ENCODE measurements at regions of chr7 and their contacts with region 1.

Region 1: GRCh38 chr7:8190119-8190895 is 71.7 kb downstream of the ICA1 start:
- DNase-seq: peak; percentile 67 to 77 (median 68)
- H3K4me3 ChIP-seq: no peak overlapping the region
- H3K4me3 Mint-ChIP-seq: no peak overlapping the region
- H3K27ac ChIP-seq: no peak overlapping the region
- H3K27ac Mint-ChIP-seq: peak overlapping the region in 2 of 7 donors; percentile 8 to 48
- H3K4me1 ChIP-seq: peaks cover 7% of the 10 kb centered on the region
- H3K4me1 Mint-ChIP-seq: peaks cover 13 to 22% (median 18%) of the 10 kb centered on the region in 4 donors
- H3K27me3 ChIP-seq: no peaks in the 10 kb centered on the region
- H3K27me3 Mint-ChIP-seq: no peaks in the 10 kb centered on the region

Region 2: DNA sequence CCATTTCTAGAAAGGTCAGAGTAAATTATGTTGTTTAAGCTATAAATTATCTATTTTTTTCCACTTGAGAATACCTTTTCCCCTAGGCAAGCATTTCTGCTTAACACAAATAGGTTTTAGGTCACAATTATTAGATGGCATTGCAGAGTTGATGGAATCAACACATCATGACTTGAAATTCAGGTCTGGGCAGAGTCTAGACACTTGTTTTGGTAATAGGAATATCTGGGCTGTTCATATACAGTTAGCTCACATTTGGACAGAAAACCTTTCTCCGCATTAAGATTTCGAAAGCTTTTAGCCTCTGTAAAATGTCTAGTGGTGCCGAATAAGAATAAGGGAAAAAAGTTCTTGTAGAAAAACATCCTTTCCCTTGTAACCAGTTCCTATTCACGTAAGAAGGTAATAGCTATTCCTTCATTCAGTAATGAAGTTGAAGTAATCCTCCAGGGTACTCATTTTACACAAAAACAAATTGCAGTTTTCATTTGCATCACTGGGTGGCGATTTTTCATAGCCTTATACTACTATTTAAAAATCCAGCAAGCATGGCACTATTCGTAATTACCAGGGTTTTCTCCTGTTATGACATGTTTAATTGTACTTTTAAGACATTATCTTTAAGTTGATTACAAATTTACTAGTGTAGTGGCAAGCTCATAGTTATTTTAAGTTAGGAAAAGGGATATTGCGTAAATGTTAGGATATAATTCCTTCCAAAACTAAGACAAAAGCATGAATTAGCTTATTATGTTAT is 508.9 kb before region 1 on chr7:
- CTCF ChIA-PET with region 1: interaction called, 44 read pairs
- POLR2A ChIA-PET with region 1: interaction called, 4 read pairs
- intact Hi-C with region 1: loop called (anchors 1 kb)
- DNase-seq: peak; percentile 47 to 62 (median 54)
- H3K4me3 ChIP-seq: no peak overlapping the region
- H3K4me3 Mint-ChIP-seq: peak overlapping the region in 3 of 8 donors; percentile 21 to 51 (median 35)
- H3K27ac ChIP-seq: no peak overlapping the region
- H3K27ac Mint-ChIP-seq: peak overlapping the region in 5 of 7 donors; percentile 41 to 59 (median 45)
- H3K4me1 ChIP-seq: peaks cover 15% of the 10 kb centered on the region
- H3K4me1 Mint-ChIP-seq: peaks cover 18 to 35% (median 24%) of the 10 kb centered on the region in 4 donors
- H3K27me3 ChIP-seq: no peaks in the 10 kb centered on the region
- H3K27me3 Mint-ChIP-seq: no peaks in the 10 kb centered on the region

Region 3: GRCh38 chr7:7977774-7978173 is 212.5 kb before region 1 on chr7:
- CTCF ChIA-PET with region 1: interaction called, 15 read pairs
- POLR2A ChIA-PET with region 1: interaction called, 3 read pairs
- intact Hi-C with region 1: no loop called
- DNase-seq: no peak
- H3K4me3 ChIP-seq: no peak overlapping the region
- H3K4me3 Mint-ChIP-seq: peak overlapping the region in 2 of 8 donors; percentile 31 to 44
- H3K27ac ChIP-seq: no peak overlapping the region
- H3K27ac Mint-ChIP-seq: peak overlapping the region in 2 of 7 donors; percentile 2 to 68
- H3K4me1 ChIP-seq: peaks cover 84% of the 10 kb centered on the region
- H3K4me1 Mint-ChIP-seq: peaks cover 54 to 84% (median 61%) of the 10 kb centered on the region in 4 donors
- H3K27me3 ChIP-seq: no peaks in the 10 kb centered on the region
- H3K27me3 Mint-ChIP-seq: no peaks in the 10 kb centered on the region

Region 4: DNA sequence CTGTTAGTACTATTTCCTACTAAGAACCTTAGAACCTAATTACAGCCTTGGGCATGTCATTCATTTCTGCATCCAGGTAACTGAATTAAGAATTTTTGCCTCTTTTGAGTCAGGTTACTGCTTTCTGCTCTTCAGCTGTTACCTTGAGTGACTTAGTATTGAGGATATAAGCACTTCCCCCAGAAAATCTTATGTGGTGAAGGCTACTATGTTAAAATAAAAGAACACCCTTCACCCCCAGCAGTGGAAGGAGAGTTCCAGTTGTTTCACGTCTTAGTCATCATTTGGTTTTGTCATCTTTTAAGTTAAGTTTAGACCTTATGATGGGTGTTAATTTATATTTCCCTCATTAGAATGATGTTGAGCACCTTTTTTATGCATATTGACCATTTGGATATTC is 138.9 kb before region 1 on chr7:
- CTCF ChIA-PET with region 1: interaction called, 10 read pairs
- POLR2A ChIA-PET with region 1: no interaction called
- intact Hi-C with region 1: no loop called
- DNase-seq: no peak
- H3K4me3 ChIP-seq: no peak overlapping the region
- H3K4me3 Mint-ChIP-seq: no peak overlapping the region
- H3K27ac ChIP-seq: no peak overlapping the region
- H3K27ac Mint-ChIP-seq: no peak overlapping the region
- H3K4me1 ChIP-seq: peaks cover 25% of the 10 kb centered on the region
- H3K4me1 Mint-ChIP-seq: peaks cover 30 to 46% (median 33%) of the 10 kb centered on the region in 4 donors
- H3K27me3 ChIP-seq: no peaks in the 10 kb centered on the region
- H3K27me3 Mint-ChIP-seq: no peaks in the 10 kb centered on the region

Region 5: GRCh38 chr7:8125680-8126444 is 64.4 kb before region 1 on chr7:
- CTCF ChIA-PET with region 1: interaction called, 13 read pairs
- POLR2A ChIA-PET with region 1: interaction called, 25 read pairs
- intact Hi-C with region 1: no loop called
- DNase-seq: peak; percentile 80 to 92 (median 84)
- H3K4me3 ChIP-seq: peak overlapping the region in 1 of 2 donors; percentile 12
- H3K4me3 Mint-ChIP-seq: peak overlapping the region; percentile 46 to 89 (median 78)
- H3K27ac ChIP-seq: peak overlapping the region; percentile 73
- H3K27ac Mint-ChIP-seq: peak overlapping the region; percentile 93 to 100 (median 98)
- H3K4me1 ChIP-seq: peaks cover 94% of the 10 kb centered on the region
- H3K4me1 Mint-ChIP-seq: peaks cover 62 to 94% (median 79%) of the 10 kb centered on the region in 4 donors
- H3K27me3 ChIP-seq: no peaks in the 10 kb centered on the region
- H3K27me3 Mint-ChIP-seq: no peaks in the 10 kb centered on the region

Region 6: GRCh38 chr7:8221567-8221966 is 31.3 kb after region 1 on chr7:
- CTCF ChIA-PET with region 1: no interaction called
- POLR2A ChIA-PET with region 1: no interaction called
- intact Hi-C with region 1: no loop called
- DNase-seq: no peak
- H3K4me3 ChIP-seq: no peak overlapping the region
- H3K4me3 Mint-ChIP-seq: no peak overlapping the region
- H3K27ac ChIP-seq: no peak overlapping the region
- H3K27ac Mint-ChIP-seq: no peak overlapping the region
- H3K4me1 ChIP-seq: no peaks in the 10 kb centered on the region
- H3K4me1 Mint-ChIP-seq: peaks cover 0 to 4% (median 2%) of the 10 kb centered on the region in 4 donors
- H3K27me3 ChIP-seq: peaks cover 3% of the 10 kb centered on the region
- H3K27me3 Mint-ChIP-seq: peaks cover 14% of the 10 kb centered on the region in 2 donors

Region 7: GRCh38 chr7:9192969-9193368 is 1002.7 kb after region 1 on chr7:
- CTCF ChIA-PET with region 1: no interaction called
- POLR2A ChIA-PET with region 1: no interaction called
- intact Hi-C with region 1: no loop called
- DNase-seq: no peak
- H3K4me3 ChIP-seq: no peak overlapping the region
- H3K4me3 Mint-ChIP-seq: no peak overlapping the region
- H3K27ac ChIP-seq: no peak overlapping the region
- H3K27ac Mint-ChIP-seq: no peak overlapping the region
- H3K4me1 ChIP-seq: no peaks in the 10 kb centered on the region
- H3K4me1 Mint-ChIP-seq: no peaks in the 10 kb centered on the region
- H3K27me3 ChIP-seq: no peaks in the 10 kb centered on the region
- H3K27me3 Mint-ChIP-seq: no peaks in the 10 kb centered on the region